Activated CD4-positive, alpha-beta memory T cell treated with anti-CD3 and anti-CD28 coated beads for 36 hours (primary cell): ENCODE measurements at regions of chr12 and their contacts with region 1.

Region 1: DNA sequence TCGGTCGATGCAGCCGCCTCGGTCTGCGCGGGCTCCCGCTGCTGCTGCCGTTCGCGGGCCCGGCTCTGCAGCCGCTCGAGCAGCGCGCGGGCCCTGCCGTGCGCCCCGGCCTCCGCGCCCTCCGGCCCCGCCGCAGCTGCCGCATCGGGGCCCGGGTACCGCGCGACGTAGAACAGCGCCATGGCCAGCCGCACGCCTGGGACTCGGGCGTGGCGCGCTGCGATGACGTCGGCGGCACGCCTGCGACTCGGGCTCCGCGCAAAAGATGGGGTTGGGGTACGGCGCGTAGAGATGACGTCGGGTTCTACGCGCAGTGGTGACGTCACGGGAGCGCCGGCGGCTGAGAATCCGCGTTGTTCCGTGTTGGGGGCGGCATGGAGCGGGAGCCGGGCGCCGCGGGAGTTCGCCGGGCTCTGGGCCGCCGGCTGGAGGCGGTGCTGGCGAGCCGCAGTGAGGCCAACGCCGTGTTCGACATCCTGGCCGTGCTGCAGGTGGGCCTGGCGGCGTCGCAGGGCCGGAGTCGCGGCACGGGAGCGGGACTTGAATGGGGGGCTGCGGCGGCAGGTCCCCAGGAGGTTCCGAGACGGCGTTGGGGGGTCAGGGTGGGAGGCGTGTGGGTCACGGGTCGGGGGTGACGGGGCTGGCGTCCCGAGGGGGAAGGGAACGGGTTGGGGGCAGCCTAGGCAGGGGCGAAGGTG is at the starts of genes DDX51 and NOC4L:
- DNase-seq: peak; percentile 97
- H3K4me3 Mint-ChIP-seq: peak within 1 kb of the TSS; percentile 87
- H3K27ac Mint-ChIP-seq: peak within 1 kb of the TSS; percentile 87
- H3K4me1 Mint-ChIP-seq: peaks cover 27% of the 10 kb centered on the region
- H3K27me3 Mint-ChIP-seq: no peaks in the 10 kb centered on the region
- total RNA-seq, gene DDX51: 18.3 to 21.3 TPM
- total RNA-seq, gene NOC4L: 29.8 to 30.5 TPM

Region 2: GRCh38 chr12:132083941-132084620 is 60.2 kb before region 1 on chr12:
- CTCF ChIA-PET with region 1: no interaction called
- POLR2A ChIA-PET with region 1: interaction called, 3 read pairs
- intact Hi-C with region 1: loop called (anchors 1 kb)
- DNase-seq: peak; percentile 93
- H3K4me3 Mint-ChIP-seq: peak overlapping the region; percentile 93
- H3K27ac Mint-ChIP-seq: peak overlapping the region; percentile 84
- H3K4me1 Mint-ChIP-seq: peaks cover 29% of the 10 kb centered on the region
- H3K27me3 Mint-ChIP-seq: no peaks in the 10 kb centered on the region

Region 3: DNA sequence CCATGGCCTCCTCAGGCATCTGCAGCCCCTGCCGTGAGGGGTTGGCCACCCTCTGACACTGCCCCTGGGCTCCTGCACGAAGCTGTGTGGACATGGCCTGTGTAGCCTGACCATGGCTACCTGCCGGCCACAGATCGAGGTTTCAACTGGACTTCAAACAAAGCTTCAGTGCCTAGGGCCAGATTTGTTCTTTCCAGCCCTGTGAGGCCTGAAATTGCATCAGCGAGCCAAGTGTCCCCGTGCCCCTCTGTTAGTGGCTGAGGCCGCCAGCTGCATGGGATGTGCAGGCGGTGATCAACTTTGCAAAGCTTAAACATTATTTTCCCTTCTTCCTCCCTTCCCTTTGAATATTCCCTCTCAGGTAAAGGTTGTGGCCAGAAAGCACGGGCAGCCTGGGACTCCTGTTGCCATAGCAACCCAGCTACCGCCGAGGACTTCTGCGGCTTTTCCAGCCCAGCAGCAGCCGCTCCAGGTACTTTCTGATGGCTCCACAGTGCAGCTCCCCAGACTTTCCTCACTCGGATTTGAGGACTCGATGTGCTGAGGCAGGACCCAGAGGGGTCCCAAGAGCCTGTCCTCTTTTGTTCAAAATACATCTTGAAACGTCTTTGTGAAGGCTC is 35.9 kb before region 1 on chr12:
- CTCF ChIA-PET with region 1: no interaction called
- POLR2A ChIA-PET with region 1: no interaction called
- intact Hi-C with region 1: no loop called
- DNase-seq: no peak
- H3K4me3 Mint-ChIP-seq: no peak overlapping the region
- H3K27ac Mint-ChIP-seq: no peak overlapping the region
- H3K4me1 Mint-ChIP-seq: no peaks in the 10 kb centered on the region
- H3K27me3 Mint-ChIP-seq: no peaks in the 10 kb centered on the region